Mammary epithelial cell (primary cell): ENCODE measurements at regions of chr9 and their contacts with region 1.

Region 1: GRCh38 chr9:81689343-81690190 is at the start of gene TLE1:
- DNase-seq: peak; percentile 100
- H3K4me3 ChIP-seq: peak within 1 kb of the TSS; percentile 72 to 93 (median 88)
- H3K27ac ChIP-seq: peak within 1 kb of the TSS; percentile 75
- H3K4me1 ChIP-seq: peaks cover 14% of the 10 kb centered on the region
- H3K27me3 ChIP-seq: no peaks in the 10 kb centered on the region
- CTCF ChIP-seq: no peak
- total RNA-seq, gene TLE1: 13.6 to 21.7 TPM

Region 2: DNA sequence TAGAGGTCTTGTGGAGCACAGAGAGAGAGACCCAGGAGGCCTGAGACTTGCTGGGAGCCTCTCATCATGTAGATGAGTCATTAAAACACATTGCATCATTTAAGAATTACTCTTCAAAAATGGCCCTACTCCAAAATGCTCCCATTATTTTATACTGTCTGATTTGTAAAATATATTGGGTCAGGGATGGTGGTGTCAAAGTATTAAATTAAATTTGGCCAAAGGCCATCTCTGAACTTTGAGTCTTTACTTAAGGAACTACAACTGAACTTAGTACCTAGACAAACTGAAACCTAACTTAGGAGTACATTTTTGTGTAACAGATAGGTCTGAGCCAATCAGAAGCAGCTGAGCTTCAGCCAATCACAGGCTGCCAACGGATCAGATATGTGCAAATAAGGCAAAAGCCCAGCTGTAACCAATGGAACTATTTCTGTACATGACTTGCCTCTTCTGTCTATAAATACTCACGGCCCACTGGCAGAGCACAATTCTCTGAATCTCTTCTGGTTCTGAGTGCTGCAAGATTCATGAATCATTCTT is 657.5 kb before region 1 on chr9:
- CTCF ChIA-PET with region 1: no interaction called
- dilution Hi-C with region 1: no loop called
- in situ Hi-C with region 1: no loop called
- intact Hi-C with region 1: loop called (anchors 5 kb)
- DNase-seq: peak; percentile 76
- H3K4me3 ChIP-seq: no peak overlapping the region
- H3K27ac ChIP-seq: peak overlapping the region; percentile 62
- H3K4me1 ChIP-seq: peaks cover 37% of the 10 kb centered on the region
- H3K27me3 ChIP-seq: no peaks in the 10 kb centered on the region
- CTCF ChIP-seq: no peak

Region 3: DNA sequence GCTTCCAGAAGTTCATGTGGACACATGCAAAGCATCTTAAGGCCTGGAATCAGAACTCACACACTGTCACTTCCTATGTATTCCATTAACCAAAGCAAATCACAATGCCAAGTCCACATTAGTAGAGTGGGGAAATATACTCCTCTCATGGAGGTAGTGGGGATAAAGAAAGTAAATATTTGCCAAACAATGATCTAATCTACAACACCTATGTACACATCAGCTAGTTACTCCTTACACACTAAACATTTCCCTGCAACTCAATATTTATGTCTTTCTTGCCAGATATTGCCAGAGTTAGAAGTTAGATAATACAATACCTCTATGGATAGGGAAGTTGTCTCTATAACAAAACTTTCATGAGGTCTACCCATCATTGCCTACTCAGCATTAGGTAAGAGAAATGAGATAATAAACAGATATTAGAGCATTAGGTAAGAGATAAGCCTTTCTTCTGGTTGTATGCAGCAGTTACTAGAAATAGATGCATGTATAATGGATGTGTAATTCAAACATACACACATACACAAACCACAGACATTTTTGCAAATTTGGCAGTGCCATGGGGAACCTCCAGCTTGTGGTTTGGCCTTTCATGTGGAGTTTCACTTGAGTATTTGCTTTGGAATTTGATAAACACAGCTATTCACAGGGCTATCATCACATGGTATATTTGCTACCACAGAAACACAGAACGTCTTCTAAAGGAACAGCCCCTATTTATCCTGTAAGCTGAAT is 196.7 kb before region 1 on chr9:
- CTCF ChIA-PET with region 1: no interaction called
- dilution Hi-C with region 1: no loop called
- in situ Hi-C with region 1: no loop called
- intact Hi-C with region 1: loop called (anchors 1 kb)
- DNase-seq: peak; percentile 96
- H3K4me3 ChIP-seq: no peak overlapping the region
- H3K27ac ChIP-seq: no peak overlapping the region
- H3K4me1 ChIP-seq: peaks cover 25% of the 10 kb centered on the region
- H3K27me3 ChIP-seq: peaks cover 3% of the 10 kb centered on the region
- CTCF ChIP-seq: no peak

Region 4: GRCh38 chr9:81552581-81552991 is 137.0 kb before region 1 on chr9:
- CTCF ChIA-PET with region 1: no interaction called
- dilution Hi-C with region 1: no loop called
- in situ Hi-C with region 1: no loop called
- intact Hi-C with region 1: loop called (anchors 1 kb)
- DNase-seq: no peak
- H3K4me3 ChIP-seq: no peak overlapping the region
- H3K27ac ChIP-seq: no peak overlapping the region
- H3K4me1 ChIP-seq: peaks cover 3% of the 10 kb centered on the region
- H3K27me3 ChIP-seq: no peaks in the 10 kb centered on the region
- CTCF ChIP-seq: no peak

Region 5: GRCh38 chr9:81671880-81672280 is 17.7 kb before region 1 on chr9:
- CTCF ChIA-PET with region 1: no interaction called
- dilution Hi-C with region 1: no loop called
- in situ Hi-C with region 1: no loop called
- intact Hi-C with region 1: no loop called
- DNase-seq: no peak
- H3K4me3 ChIP-seq: no peak overlapping the region
- H3K27ac ChIP-seq: no peak overlapping the region
- H3K4me1 ChIP-seq: no peaks in the 10 kb centered on the region
- H3K27me3 ChIP-seq: no peaks in the 10 kb centered on the region
- CTCF ChIP-seq: no peak

Region 6: GRCh38 chr9:81848472-81848871 is 158.9 kb after region 1 on chr9:
- CTCF ChIA-PET with region 1: no interaction called
- dilution Hi-C with region 1: no loop called
- in situ Hi-C with region 1: no loop called
- intact Hi-C with region 1: loop called (anchors 1 kb)
- DNase-seq: peak; percentile 32
- H3K4me3 ChIP-seq: no peak overlapping the region
- H3K27ac ChIP-seq: no peak overlapping the region
- H3K4me1 ChIP-seq: no peaks in the 10 kb centered on the region
- H3K27me3 ChIP-seq: no peaks in the 10 kb centered on the region
- CTCF ChIP-seq: peak; percentile 31 to 53

Region 7: DNA sequence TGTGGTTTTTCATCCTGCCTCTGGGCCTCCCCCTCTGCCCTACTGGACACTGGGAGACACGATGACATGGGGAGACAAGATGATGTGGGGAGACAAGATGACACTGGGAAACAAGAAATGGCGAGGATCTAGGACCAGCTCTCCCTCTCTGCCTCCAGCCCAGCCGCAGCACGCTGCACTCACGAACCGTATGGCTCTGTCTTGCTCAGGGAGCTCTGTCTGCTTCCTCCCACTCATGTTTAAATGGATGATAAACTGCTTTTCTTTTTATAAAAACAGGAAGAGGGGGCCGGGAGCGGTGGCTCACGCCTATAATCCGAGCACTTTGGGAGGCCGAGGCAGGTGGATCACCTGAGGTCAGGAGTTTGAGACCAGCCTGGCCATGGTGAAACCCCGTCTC is 372.7 kb after region 1 on chr9:
- CTCF ChIA-PET with region 1: no interaction called
- dilution Hi-C with region 1: no loop called
- in situ Hi-C with region 1: no loop called
- intact Hi-C with region 1: no loop called
- DNase-seq: no peak
- H3K4me3 ChIP-seq: no peak overlapping the region
- H3K27ac ChIP-seq: no peak overlapping the region
- H3K4me1 ChIP-seq: no peaks in the 10 kb centered on the region
- H3K27me3 ChIP-seq: no peaks in the 10 kb centered on the region
- CTCF ChIP-seq: no peak

Region 8: GRCh38 chr9:82606492-82607382 is 917.2 kb after region 1 on chr9:
- CTCF ChIA-PET with region 1: interaction called, 5 read pairs
- dilution Hi-C with region 1: no loop called
- in situ Hi-C with region 1: no loop called
- intact Hi-C with region 1: loop called (anchors 1 kb)
- DNase-seq: peak; percentile 35
- H3K4me3 ChIP-seq: no peak overlapping the region
- H3K27ac ChIP-seq: no peak overlapping the region
- H3K4me1 ChIP-seq: no peaks in the 10 kb centered on the region
- H3K27me3 ChIP-seq: no peaks in the 10 kb centered on the region
- CTCF ChIP-seq: peak; percentile 52 to 66